GM12878 (cell line): ENCODE measurements at regions of chr10 and their contacts with region 1.

Region 1: DNA sequence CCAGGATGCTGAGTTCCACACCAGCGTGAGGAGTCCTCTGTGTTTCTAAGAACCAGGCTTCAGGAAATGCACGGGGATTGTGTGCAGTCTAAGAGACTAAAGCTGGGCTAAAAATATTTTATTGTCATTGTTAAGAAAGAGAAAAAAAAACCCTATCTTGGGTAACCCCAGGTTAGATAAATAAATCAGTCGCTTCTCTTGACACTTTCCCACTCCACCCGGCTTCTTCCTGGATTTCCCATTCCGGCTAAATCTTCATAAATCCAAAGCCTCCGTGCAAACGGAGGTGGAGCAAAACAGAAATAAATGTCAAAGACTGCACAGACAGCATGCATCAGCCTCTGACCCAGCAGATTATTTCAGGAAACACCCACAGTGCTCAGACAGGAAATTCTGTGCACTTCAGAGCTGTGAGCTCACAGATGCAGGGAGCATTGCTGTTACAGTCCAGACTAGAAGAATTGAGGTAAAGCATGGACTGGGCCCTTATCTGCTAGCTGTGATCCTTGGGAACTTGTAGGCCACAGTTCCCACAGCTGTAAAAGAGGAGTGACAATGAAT is 44.8 kb upstream of the GRID1 start:
- DNase-seq: peak; percentile 74
- ATAC-seq: peak; percentile 74
- H3K4me3 ChIP-seq: peak overlapping the region; percentile 38; the same call in 1 of the 2 replicates
- H3K27ac ChIP-seq: peak overlapping the region; percentile 82
- H3K4me1 ChIP-seq: peaks cover 38% of the 10 kb centered on the region
- H3K27me3 ChIP-seq: no peaks in the 10 kb centered on the region
- CTCF ChIP-seq: no peak
- EP300 ChIP-seq: peak in 1 of 2 experiments; percentile 66; a peak in 1 of 4 replicates
- POLR2A ChIP-seq: peak; percentile 68
- RAD21 ChIP-seq: no peak

Region 2: GRCh38 chr10:86267286-86268195 is 143.8 kb before region 1 on chr10:
- CTCF ChIA-PET with region 1: no interaction called
- POLR2A ChIA-PET with region 1: no interaction called
- RAD21 ChIA-PET with region 1: no interaction called
- SMC1A ChIA-PET with region 1: no interaction called
- in situ Hi-C with region 1: no loop called
- intact Hi-C with region 1: no loop called
- DNase-seq: no peak
- ATAC-seq: no peak
- H3K4me3 ChIP-seq: no peak overlapping the region
- H3K27ac ChIP-seq: no peak overlapping the region
- H3K4me1 ChIP-seq: no peaks in the 10 kb centered on the region
- H3K27me3 ChIP-seq: no peaks in the 10 kb centered on the region; a peak in 1 of 4 replicates
- CTCF ChIP-seq: no peak
- EP300 ChIP-seq: no peak
- POLR2A ChIP-seq: no peak
- RAD21 ChIP-seq: no peak

Region 3: GRCh38 chr10:86389441-86390193 is 21.7 kb before region 1 on chr10:
- CTCF ChIA-PET with region 1: interaction called, 9 read pairs
- POLR2A ChIA-PET with region 1: interaction called, 24 read pairs
- RAD21 ChIA-PET with region 1: interaction called, 13 read pairs
- SMC1A ChIA-PET with region 1: interaction called, 129 read pairs
- in situ Hi-C with region 1: no loop called
- intact Hi-C with region 1: no loop called
- DNase-seq: no peak
- ATAC-seq: peak; percentile 85
- H3K4me3 ChIP-seq: peak overlapping the region; percentile 87
- H3K27ac ChIP-seq: peak overlapping the region; percentile 91
- H3K4me1 ChIP-seq: peaks cover 36% of the 10 kb centered on the region
- H3K27me3 ChIP-seq: no peaks in the 10 kb centered on the region
- CTCF ChIP-seq: peak; percentile 21 to 40 (median 21); a peak in 3 of 6 replicates
- EP300 ChIP-seq: no peak
- POLR2A ChIP-seq: peak; percentile 71
- RAD21 ChIP-seq: no peak